T-cell (primary cell): ENCODE measurements at regions of chr17 and their contacts with region 1.

Region 1: GRCh38 chr17:42577532-42578281 is at the start of gene PSMC3IP:
- DNase-seq: peak; percentile 79 to 94 (median 87)
- ATAC-seq: peak; percentile 93 to 94 (median 93)
- H3K4me3 ChIP-seq: peak within 1 kb of the TSS; percentile 76 to 95
- H3K4me3 Mint-ChIP-seq: peak within 1 kb of the TSS; percentile 88 to 99 (median 98)
- H3K27ac ChIP-seq: peak within 1 kb of the TSS; percentile 40
- H3K27ac Mint-ChIP-seq: peak within 1 kb of the TSS; percentile 96 to 98
- H3K4me1 ChIP-seq: peaks cover 5 to 20% of the 10 kb centered on the region in 2 experiments
- H3K4me1 Mint-ChIP-seq: peaks cover 32 to 38% (median 36%) of the 10 kb centered on the region in 3 donors
- H3K27me3 ChIP-seq: no peaks in the 10 kb centered on the region
- H3K27me3 Mint-ChIP-seq: no peaks in the 10 kb centered on the region
- total RNA-seq, gene PSMC3IP: 2.2 to 4.3 (median 3.2) TPM

Region 2: GRCh38 chr17:42566883-42567573 is 10.7 kb before region 1 on chr17 and contains the start of gene MLX:
- CTCF ChIA-PET with region 1: interaction called in 1 of 2 experiments, 16 read pairs
- POLR2A ChIA-PET with region 1: no interaction called
- DNase-seq: peak; percentile 77 to 96 (median 88)
- ATAC-seq: peak; percentile 79 to 83 (median 81)
- H3K4me3 ChIP-seq: peak within 1 kb of the TSS; percentile 76 to 94
- H3K4me3 Mint-ChIP-seq: peak within 1 kb of the TSS; percentile 81 to 91 (median 90)
- H3K27ac ChIP-seq: peak within 1 kb of the TSS; percentile 86
- H3K27ac Mint-ChIP-seq: peak within 1 kb of the TSS; percentile 92 to 94
- H3K4me1 ChIP-seq: peaks cover 16 to 65% of the 10 kb centered on the region in 2 experiments
- H3K4me1 Mint-ChIP-seq: peaks cover 24 to 54% (median 48%) of the 10 kb centered on the region in 3 donors
- H3K27me3 ChIP-seq: no peaks in the 10 kb centered on the region
- H3K27me3 Mint-ChIP-seq: no peaks in the 10 kb centered on the region
- total RNA-seq, gene MLX: 31.4 to 68.9 (median 61.2) TPM

Region 3: DNA sequence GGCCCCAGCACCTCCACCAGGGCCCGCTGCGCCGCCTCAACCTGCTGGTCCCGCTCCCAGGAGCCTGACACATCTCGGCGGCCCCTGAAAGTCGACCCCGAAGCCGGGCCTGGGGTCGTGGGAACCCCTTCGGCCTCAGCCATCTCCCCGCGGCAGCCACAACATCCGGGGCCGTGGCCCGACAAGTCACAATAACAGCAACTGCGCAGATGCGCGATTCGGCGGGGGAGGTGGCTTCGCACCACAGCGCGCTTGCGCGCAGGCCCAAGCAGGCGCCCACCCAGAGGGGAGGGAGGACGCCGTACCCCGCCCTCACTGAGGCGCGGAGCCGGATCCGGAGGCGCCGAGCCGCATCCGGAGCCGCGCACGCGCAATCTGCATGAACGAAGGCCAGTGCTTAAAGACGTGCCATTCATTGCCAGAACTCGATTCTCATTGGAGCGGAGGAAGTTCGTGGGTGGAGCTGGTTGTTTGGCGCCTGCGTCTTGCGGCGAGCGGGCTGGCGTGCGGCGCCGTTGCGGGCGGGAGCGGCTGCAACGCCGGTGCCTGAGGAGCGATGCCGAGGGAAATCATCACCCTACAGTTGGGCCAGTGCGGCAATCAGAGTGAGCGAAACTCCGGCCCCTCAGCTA is 31.6 kb after region 1 on chr17 and contains the starts of genes RETREG3 and TUBG1:
- CTCF ChIA-PET with region 1: interaction called, 7 to 22 read pairs
- POLR2A ChIA-PET with region 1: interaction called in 1 of 2 experiments, 4 read pairs
- DNase-seq: peak; percentile 97 to 100 (median 99)
- ATAC-seq: peak; percentile 90 to 93 (median 92)
- H3K4me3 ChIP-seq: peak within 1 kb of the TSS; percentile 95 to 99
- H3K4me3 Mint-ChIP-seq: peak within 1 kb of the TSS; percentile 98 to 100 (median 99)
- H3K27ac ChIP-seq: peak within 1 kb of the TSS; percentile 77
- H3K27ac Mint-ChIP-seq: peak within 1 kb of the TSS; percentile 99 to 100
- H3K4me1 ChIP-seq: peaks cover 22 to 36% of the 10 kb centered on the region in 2 experiments
- H3K4me1 Mint-ChIP-seq: peaks cover 43 to 49% (median 46%) of the 10 kb centered on the region in 3 donors
- H3K27me3 ChIP-seq: no peaks in the 10 kb centered on the region
- H3K27me3 Mint-ChIP-seq: no peaks in the 10 kb centered on the region
- total RNA-seq, gene RETREG3: 72.4 to 150 (median 139) TPM
- total RNA-seq, gene TUBG1: 6.5 to 18.9 (median 16.2) TPM

Region 4: DNA sequence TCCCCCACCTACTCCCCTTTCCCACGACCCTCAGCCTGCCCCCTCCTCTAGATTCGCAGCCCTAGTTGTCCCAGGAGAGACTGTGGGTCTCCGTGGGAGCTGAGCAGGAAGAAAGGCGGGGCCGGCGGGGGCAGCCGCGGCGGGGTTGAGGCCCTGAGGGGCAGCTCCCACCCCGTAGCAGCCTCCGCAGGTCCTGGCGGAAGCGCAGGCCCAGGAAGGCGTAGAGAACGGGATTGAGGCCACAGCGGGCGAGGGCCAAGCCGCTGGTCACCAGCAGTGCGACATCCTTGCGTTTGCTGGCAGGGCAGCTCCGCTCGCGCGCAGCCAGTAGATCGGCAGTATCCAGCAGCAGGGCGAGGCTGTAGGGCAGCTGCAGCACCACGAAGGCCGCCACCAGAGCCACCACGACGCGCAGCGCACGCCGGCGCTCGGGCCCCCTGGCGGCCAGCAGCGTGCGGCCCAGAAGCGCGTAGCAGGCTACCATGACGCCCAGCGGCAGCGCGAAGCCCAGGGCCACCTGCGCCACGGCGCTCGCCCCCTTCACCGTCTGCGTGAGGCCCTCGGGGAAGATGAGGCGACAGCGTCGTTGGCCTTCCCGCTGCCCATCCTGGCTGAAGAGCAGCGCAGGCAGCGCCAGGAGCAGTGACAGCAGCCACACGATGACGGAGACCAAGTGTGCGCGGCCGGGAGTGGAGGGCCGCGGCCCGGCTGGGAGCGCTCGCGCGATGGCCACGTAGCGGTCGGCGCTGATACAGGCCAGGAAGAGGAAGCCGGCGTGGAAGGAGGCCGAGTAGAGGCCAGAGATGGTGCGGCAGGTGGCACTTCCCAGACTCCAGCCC is 102.0 kb after region 1 on chr17:
- CTCF ChIA-PET with region 1: interaction called, 3 to 17 read pairs
- POLR2A ChIA-PET with region 1: no interaction called
- DNase-seq: peak; percentile 39 to 87 (median 62)
- ATAC-seq: peak; percentile 53 to 65 (median 58)
- H3K4me3 ChIP-seq: peak overlapping the region; percentile 47 to 60
- H3K4me3 Mint-ChIP-seq: peak overlapping the region; percentile 73 to 87 (median 74)
- H3K27ac ChIP-seq: peak overlapping the region; percentile 62
- H3K27ac Mint-ChIP-seq: peak overlapping the region; percentile 74 to 87
- H3K4me1 ChIP-seq: peaks cover 37 to 84% of the 10 kb centered on the region in 2 experiments
- H3K4me1 Mint-ChIP-seq: peaks cover 52 to 71% (median 63%) of the 10 kb centered on the region in 3 donors
- H3K27me3 ChIP-seq: peaks cover 3 to 68% of the 10 kb centered on the region in 2 experiments
- H3K27me3 Mint-ChIP-seq: peaks cover 27 to 48% of the 10 kb centered on the region in 2 donors

Region 5: GRCh38 chr17:42720996-42721583 is 143.4 kb after region 1 on chr17:
- CTCF ChIA-PET with region 1: no interaction called
- POLR2A ChIA-PET with region 1: interaction called in 1 of 2 experiments, 10 read pairs
- DNase-seq: peak in 19 of 35 experiments; percentile 4 to 79 (median 23)
- ATAC-seq: peak; percentile 66 to 77 (median 72)
- H3K4me3 ChIP-seq: no peak overlapping the region
- H3K4me3 Mint-ChIP-seq: no peak overlapping the region
- H3K27ac ChIP-seq: no peak overlapping the region
- H3K27ac Mint-ChIP-seq: no peak overlapping the region
- H3K4me1 ChIP-seq: no peaks in the 10 kb centered on the region
- H3K4me1 Mint-ChIP-seq: peaks cover 1 to 8% (median 5%) of the 10 kb centered on the region in 3 donors
- H3K27me3 ChIP-seq: no peaks in the 10 kb centered on the region
- H3K27me3 Mint-ChIP-seq: no peaks in the 10 kb centered on the region

Region 6: GRCh38 chr17:42760652-42761581 is 183.2 kb after region 1 on chr17 and contains the start of gene RAMP2:
- CTCF ChIA-PET with region 1: interaction called in 1 of 2 experiments, 16 read pairs
- POLR2A ChIA-PET with region 1: no interaction called
- DNase-seq: peak in 3 of 35 experiments; percentile 9 to 29 (median 20)
- ATAC-seq: peak; percentile 53 to 67 (median 61)
- H3K4me3 ChIP-seq: peak within 1 kb of the TSS; percentile 6 to 25
- H3K4me3 Mint-ChIP-seq: peak within 1 kb of the TSS; percentile 17 to 61 (median 51)
- H3K27ac ChIP-seq: no peak within 1 kb of the TSS
- H3K27ac Mint-ChIP-seq: no peak within 1 kb of the TSS
- H3K4me1 ChIP-seq: peaks cover 0 to 14% of the 10 kb centered on the region in 2 experiments
- H3K4me1 Mint-ChIP-seq: peaks cover 0 to 14% (median 9%) of the 10 kb centered on the region in 3 donors
- H3K27me3 ChIP-seq: peaks cover 7 to 65% of the 10 kb centered on the region in 2 experiments
- H3K27me3 Mint-ChIP-seq: peaks cover 55 to 71% of the 10 kb centered on the region in 2 donors
- total RNA-seq, gene RAMP2: not detected

Region 7: GRCh38 chr17:42819944-42820535 is 242.3 kb after region 1 on chr17:
- CTCF ChIA-PET with region 1: interaction called in 1 of 2 experiments, 12 read pairs
- POLR2A ChIA-PET with region 1: no interaction called
- DNase-seq: peak in 32 of 35 experiments; percentile 12 to 75 (median 52)
- ATAC-seq: no peak
- H3K4me3 ChIP-seq: no peak overlapping the region
- H3K4me3 Mint-ChIP-seq: peak overlapping the region in 1 of 3 donors; percentile 1
- H3K27ac ChIP-seq: peak overlapping the region; percentile 5
- H3K27ac Mint-ChIP-seq: no peak overlapping the region
- H3K4me1 ChIP-seq: peaks cover 7 to 20% of the 10 kb centered on the region in 2 experiments
- H3K4me1 Mint-ChIP-seq: peaks cover 28 to 40% (median 39%) of the 10 kb centered on the region in 3 donors
- H3K27me3 ChIP-seq: no peaks in the 10 kb centered on the region
- H3K27me3 Mint-ChIP-seq: no peaks in the 10 kb centered on the region